A673 (cell line): ENCODE measurements at regions of chr2 and their contacts with region 1.

Region 1: DNA sequence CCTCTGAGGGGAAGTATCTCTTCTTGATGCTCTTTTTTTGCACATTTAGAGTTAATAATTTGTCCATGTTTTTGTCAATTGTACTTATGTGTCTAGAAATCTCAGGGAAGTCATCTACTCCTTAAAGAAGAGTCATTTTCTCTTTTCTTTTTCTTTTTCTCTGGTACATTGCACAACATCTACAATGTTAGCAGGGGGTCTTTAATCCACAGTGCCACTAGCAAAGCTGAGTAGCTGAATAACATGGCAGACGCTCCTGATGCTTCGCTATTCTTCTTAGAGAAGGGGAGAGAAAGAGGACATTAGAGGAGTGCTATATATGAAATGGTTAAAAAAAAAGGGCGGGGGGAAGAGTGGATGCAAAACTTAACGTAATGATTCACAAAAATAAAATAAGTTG is 399.6 kb upstream of the CWC22 start:
- DNase-seq: peak; percentile 23
- H3K4me3 ChIP-seq: no peak overlapping the region
- H3K27ac ChIP-seq: no peak overlapping the region
- H3K4me1 ChIP-seq: no peaks in the 10 kb centered on the region
- H3K27me3 ChIP-seq: no peaks in the 10 kb centered on the region
- CTCF ChIP-seq: no peak

Region 2: DNA sequence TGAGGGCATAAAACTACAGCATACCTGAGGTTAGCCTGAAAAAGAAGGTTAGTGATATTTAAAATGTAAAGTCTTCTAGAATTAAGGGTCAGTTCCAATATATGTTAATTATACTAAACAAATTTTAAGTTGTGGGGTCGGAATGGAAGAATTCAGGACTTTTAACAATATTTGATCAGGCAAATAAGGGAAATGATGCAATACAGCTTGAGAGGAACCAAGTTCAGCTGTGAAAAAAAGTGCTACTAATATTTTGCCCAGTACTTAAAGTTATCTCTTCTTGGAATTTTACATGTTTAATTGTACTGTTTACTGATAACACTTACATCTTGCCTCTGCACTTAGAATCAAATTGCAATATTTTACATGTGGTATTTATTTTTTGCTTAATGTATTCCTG is 54.1 kb before region 1 on chr2:
- CTCF ChIA-PET with region 1: no interaction called
- POLR2A ChIA-PET with region 1: no interaction called
- intact Hi-C with region 1: loop called (anchors 2 kb)
- DNase-seq: no peak
- H3K4me3 ChIP-seq: no peak overlapping the region
- H3K27ac ChIP-seq: no peak overlapping the region
- H3K4me1 ChIP-seq: no peaks in the 10 kb centered on the region
- H3K27me3 ChIP-seq: no peaks in the 10 kb centered on the region
- CTCF ChIP-seq: no peak